Breast epithelium (tissue), 4 donors: ENCODE measurements at regions of chr4 and their contacts with region 1.

Region 1: GRCh38 chr4:117847849-117848248 is 186.4 kb upstream of the NDST3 start:
- DNase-seq: no peak
- H3K4me3 ChIP-seq: no peak overlapping the region
- H3K27ac ChIP-seq: no peak overlapping the region
- H3K4me1 ChIP-seq: no peaks in the 10 kb centered on the region
- H3K27me3 ChIP-seq: no peaks in the 10 kb centered on the region
- CTCF ChIP-seq: no peak
- POLR2A ChIP-seq: no peak

Region 2: DNA sequence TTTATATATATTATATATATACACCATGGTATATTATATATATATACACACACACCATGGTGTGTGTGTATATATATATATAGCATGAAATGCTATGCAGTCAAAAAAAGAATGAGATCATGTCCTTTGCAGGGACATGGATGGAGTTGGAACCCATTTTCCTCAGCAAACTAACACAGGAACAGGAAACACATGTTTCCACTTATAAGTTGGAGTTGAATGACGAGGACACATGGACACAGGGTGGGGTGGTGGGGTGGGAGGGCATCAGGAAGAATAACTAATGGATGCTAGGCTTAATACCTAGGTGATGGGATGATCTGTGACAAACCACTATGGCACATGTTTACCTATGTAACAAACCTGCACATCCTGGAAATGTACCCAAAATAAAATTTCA is 107.1 kb before region 1 on chr4:
- intact Hi-C with region 1: no loop called
- DNase-seq: no peak
- H3K4me3 ChIP-seq: no peak overlapping the region
- H3K27ac ChIP-seq: no peak overlapping the region
- H3K4me1 ChIP-seq: no peaks in the 10 kb centered on the region
- H3K27me3 ChIP-seq: no peaks in the 10 kb centered on the region
- CTCF ChIP-seq: no peak
- POLR2A ChIP-seq: no peak

Region 3: GRCh38 chr4:117831060-117831683 is 16.7 kb before region 1 on chr4:
- intact Hi-C with region 1: loop called (anchors 1 kb)
- DNase-seq: no peak
- H3K4me3 ChIP-seq: no peak overlapping the region
- H3K27ac ChIP-seq: no peak overlapping the region
- H3K4me1 ChIP-seq: no peaks in the 10 kb centered on the region
- H3K27me3 ChIP-seq: no peaks in the 10 kb centered on the region
- CTCF ChIP-seq: no peak
- POLR2A ChIP-seq: no peak

Region 4: GRCh38 chr4:118278473-118279274 is 430.8 kb after region 1 on chr4:
- intact Hi-C with region 1: no loop called
- DNase-seq: peak; percentile 96 to 97
- H3K4me3 ChIP-seq: peak overlapping the region; percentile 68 to 73 (median 69)
- H3K27ac ChIP-seq: peak overlapping the region; percentile 94 to 97
- H3K4me1 ChIP-seq: peaks cover 0 to 10% of the 10 kb centered on the region in 2 donors
- H3K27me3 ChIP-seq: no peaks in the 10 kb centered on the region
- CTCF ChIP-seq: no peak
- POLR2A ChIP-seq: peak; percentile 66

Region 5: GRCh38 chr4:119246177-119246733 is 1398.4 kb after region 1 on chr4:
- intact Hi-C with region 1: no loop called
- DNase-seq: no peak
- H3K4me3 ChIP-seq: no peak overlapping the region
- H3K27ac ChIP-seq: no peak overlapping the region
- H3K4me1 ChIP-seq: no peaks in the 10 kb centered on the region
- H3K27me3 ChIP-seq: no peaks in the 10 kb centered on the region
- CTCF ChIP-seq: no peak
- POLR2A ChIP-seq: no peak